Endothelial cell of umbilical vein (primary cell): ENCODE measurements at regions of chr12 and their contacts with region 1.

Region 1: DNA sequence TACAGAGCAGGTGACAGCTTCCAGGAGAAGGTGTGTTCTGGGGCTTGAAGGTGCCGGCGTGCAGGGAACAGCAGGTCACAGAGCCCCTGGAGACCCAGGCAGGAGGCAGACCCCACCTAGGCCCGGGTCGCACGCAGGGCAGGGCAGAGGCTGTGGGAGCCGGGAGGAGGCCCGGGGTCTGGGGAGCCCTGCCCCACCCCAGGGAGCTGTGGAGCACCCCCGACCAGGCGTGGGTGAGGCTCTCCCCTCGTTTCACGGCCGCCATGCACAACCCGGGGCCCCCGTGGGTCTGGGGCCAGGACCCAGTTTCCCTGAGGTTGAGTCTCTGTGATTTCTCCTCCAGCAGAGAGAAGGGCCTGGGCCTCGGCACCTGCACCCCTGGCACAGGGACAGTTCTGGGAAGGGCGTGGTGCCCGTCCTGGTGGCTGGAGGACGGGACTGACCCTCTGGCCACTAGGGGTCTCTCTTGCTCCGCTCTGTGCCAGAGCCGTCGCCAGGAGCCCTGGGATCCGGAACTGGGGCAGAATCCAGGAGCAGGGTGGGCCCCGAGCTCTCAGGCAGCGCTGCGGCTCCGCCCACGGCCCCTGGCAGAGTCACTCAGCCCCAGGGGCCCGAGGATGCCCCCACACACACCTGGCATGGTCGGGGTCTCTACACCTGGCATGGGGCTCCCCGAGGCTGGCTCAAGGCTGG is 75.2 kb upstream of the FBRSL1 start:
- DNase-seq: peak; percentile 51
- H3K4me3 ChIP-seq: no peak overlapping the region
- H3K27ac ChIP-seq: no peak overlapping the region
- H3K4me1 ChIP-seq: no peaks in the 10 kb centered on the region
- H3K27me3 ChIP-seq: no peaks in the 10 kb centered on the region
- CTCF ChIP-seq: peak; percentile 87 to 97
- POLR2A ChIP-seq: no peak

Region 2: GRCh38 chr12:132144115-132144812 is 270.5 kb before region 1 on chr12 and contains the starts of genes DDX51 and NOC4L:
- CTCF ChIA-PET with region 1: interaction called, 6 read pairs
- POLR2A ChIA-PET with region 1: no interaction called
- dilution Hi-C with region 1: no loop called
- intact Hi-C with region 1: loop called (anchors 2 kb)
- DNase-seq: peak; percentile 97
- H3K4me3 ChIP-seq: peak within 1 kb of the TSS; percentile 54 to 77 (median 55)
- H3K27ac ChIP-seq: peak within 1 kb of the TSS; percentile 30
- H3K4me1 ChIP-seq: peaks cover 14% of the 10 kb centered on the region
- H3K27me3 ChIP-seq: no peaks in the 10 kb centered on the region
- CTCF ChIP-seq: no peak
- POLR2A ChIP-seq: peak; percentile 62
- total RNA-seq, gene DDX51: 23.5 and 27.2 TPM in 2 replicates
- total RNA-seq, gene NOC4L: 28.0 and 29.4 TPM in 2 replicates

Region 3: GRCh38 chr12:132153501-132154340 is 261.1 kb before region 1 on chr12:
- CTCF ChIA-PET with region 1: interaction called, 119 read pairs
- POLR2A ChIA-PET with region 1: no interaction called
- dilution Hi-C with region 1: no loop called
- intact Hi-C with region 1: no loop called
- DNase-seq: peak; percentile 53
- H3K4me3 ChIP-seq: no peak overlapping the region
- H3K27ac ChIP-seq: no peak overlapping the region
- H3K4me1 ChIP-seq: no peaks in the 10 kb centered on the region
- H3K27me3 ChIP-seq: no peaks in the 10 kb centered on the region
- CTCF ChIP-seq: peak; percentile 89 to 98
- POLR2A ChIP-seq: no peak

Region 4: GRCh38 chr12:132285991-132286681 is 128.6 kb before region 1 on chr12:
- CTCF ChIA-PET with region 1: interaction called, 20 read pairs
- POLR2A ChIA-PET with region 1: no interaction called
- dilution Hi-C with region 1: no loop called
- intact Hi-C with region 1: no loop called
- DNase-seq: peak; percentile 68
- H3K4me3 ChIP-seq: peak overlapping the region in 1 of 3 experiments; percentile 20
- H3K27ac ChIP-seq: no peak overlapping the region
- H3K4me1 ChIP-seq: no peaks in the 10 kb centered on the region
- H3K27me3 ChIP-seq: no peaks in the 10 kb centered on the region
- CTCF ChIP-seq: no peak
- POLR2A ChIP-seq: no peak

Region 5: GRCh38 chr12:132367071-132367851 is 47.5 kb before region 1 on chr12:
- CTCF ChIA-PET with region 1: no interaction called
- POLR2A ChIA-PET with region 1: no interaction called
- dilution Hi-C with region 1: no loop called
- intact Hi-C with region 1: no loop called
- DNase-seq: no peak
- H3K4me3 ChIP-seq: no peak overlapping the region
- H3K27ac ChIP-seq: no peak overlapping the region
- H3K4me1 ChIP-seq: no peaks in the 10 kb centered on the region
- H3K27me3 ChIP-seq: no peaks in the 10 kb centered on the region
- CTCF ChIP-seq: no peak
- POLR2A ChIP-seq: no peak

Region 6: GRCh38 chr12:132523576-132524331 is 109.0 kb after region 1 on chr12:
- CTCF ChIA-PET with region 1: interaction called, 75 read pairs
- POLR2A ChIA-PET with region 1: no interaction called
- dilution Hi-C with region 1: no loop called
- intact Hi-C with region 1: loop called (anchors 1 kb)
- DNase-seq: peak; percentile 28
- H3K4me3 ChIP-seq: no peak overlapping the region
- H3K27ac ChIP-seq: no peak overlapping the region
- H3K4me1 ChIP-seq: no peaks in the 10 kb centered on the region
- H3K27me3 ChIP-seq: no peaks in the 10 kb centered on the region
- CTCF ChIP-seq: peak; percentile 81 to 90
- POLR2A ChIP-seq: no peak

Region 7: GRCh38 chr12:132560614-132561426 is 146.0 kb after region 1 on chr12:
- CTCF ChIA-PET with region 1: interaction called, 58 read pairs
- POLR2A ChIA-PET with region 1: interaction called, 3 read pairs
- dilution Hi-C with region 1: no loop called
- intact Hi-C with region 1: loop called (anchors 1 kb)
- DNase-seq: peak; percentile 63
- H3K4me3 ChIP-seq: peak overlapping the region; percentile 79 to 91 (median 81)
- H3K27ac ChIP-seq: peak overlapping the region; percentile 41
- H3K4me1 ChIP-seq: peaks cover 5% of the 10 kb centered on the region
- H3K27me3 ChIP-seq: no peaks in the 10 kb centered on the region
- CTCF ChIP-seq: peak; percentile 86 to 96
- POLR2A ChIP-seq: peak; percentile 42

Region 8: DNA sequence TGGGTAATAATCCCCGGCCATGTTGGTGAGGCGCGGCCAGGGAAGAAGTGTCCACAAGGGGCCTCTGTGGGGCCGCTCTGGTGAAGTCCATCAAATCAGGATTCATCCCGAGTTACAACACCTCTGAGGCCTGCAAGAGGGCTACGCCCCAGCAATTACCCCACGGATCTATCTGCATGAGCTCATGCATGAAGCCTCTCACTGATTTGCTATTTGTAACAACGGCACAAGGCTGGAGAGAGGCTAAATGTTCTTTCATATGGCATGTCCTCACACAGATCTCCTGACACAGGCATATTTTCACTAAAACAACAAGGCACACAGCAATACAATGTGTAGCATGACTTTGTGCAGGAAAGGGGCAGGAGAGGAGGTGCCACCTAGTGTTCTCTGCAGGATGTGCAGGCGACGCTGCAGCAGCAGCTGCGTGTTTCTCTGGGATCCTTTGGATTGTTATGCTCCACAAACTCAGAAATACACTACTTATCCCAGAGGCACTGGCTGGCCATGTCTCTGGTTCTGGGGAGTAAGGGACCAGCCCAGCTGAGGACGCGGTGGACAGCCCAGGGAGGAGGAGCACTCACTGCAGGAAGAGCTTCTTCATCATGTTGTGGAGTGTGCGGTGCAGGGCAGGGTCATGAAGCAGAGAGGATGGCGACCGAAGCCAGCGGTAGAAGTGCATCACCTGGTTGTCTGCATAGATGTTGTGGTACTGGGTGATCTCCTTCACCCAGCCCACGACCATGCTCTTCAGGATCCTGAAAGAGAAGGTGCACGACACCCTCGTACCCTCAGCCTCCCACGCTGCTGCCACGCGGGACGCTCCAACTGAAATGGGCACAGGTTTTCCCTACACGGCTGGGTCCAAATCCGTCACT is 224.0 kb after region 1 on chr12:
- CTCF ChIA-PET with region 1: interaction called, 34 read pairs
- POLR2A ChIA-PET with region 1: no interaction called
- dilution Hi-C with region 1: no loop called
- intact Hi-C with region 1: loop called (anchors 1 kb)
- DNase-seq: peak; percentile 59
- H3K4me3 ChIP-seq: no peak overlapping the region
- H3K27ac ChIP-seq: no peak overlapping the region
- H3K4me1 ChIP-seq: no peaks in the 10 kb centered on the region
- H3K27me3 ChIP-seq: no peaks in the 10 kb centered on the region
- CTCF ChIP-seq: peak; percentile 78 to 83
- POLR2A ChIP-seq: no peak

Region 9: GRCh38 chr12:132754160-132754932 is 339.6 kb after region 1 on chr12:
- CTCF ChIA-PET with region 1: no interaction called
- POLR2A ChIA-PET with region 1: no interaction called
- dilution Hi-C with region 1: no loop called
- intact Hi-C with region 1: no loop called
- DNase-seq: no peak
- H3K4me3 ChIP-seq: no peak overlapping the region
- H3K27ac ChIP-seq: no peak overlapping the region
- H3K4me1 ChIP-seq: no peaks in the 10 kb centered on the region
- H3K27me3 ChIP-seq: no peaks in the 10 kb centered on the region
- CTCF ChIP-seq: no peak
- POLR2A ChIP-seq: no peak